ENCODE measurements at regions of chr1 and their contacts with region 1.

Region 1: DNA sequence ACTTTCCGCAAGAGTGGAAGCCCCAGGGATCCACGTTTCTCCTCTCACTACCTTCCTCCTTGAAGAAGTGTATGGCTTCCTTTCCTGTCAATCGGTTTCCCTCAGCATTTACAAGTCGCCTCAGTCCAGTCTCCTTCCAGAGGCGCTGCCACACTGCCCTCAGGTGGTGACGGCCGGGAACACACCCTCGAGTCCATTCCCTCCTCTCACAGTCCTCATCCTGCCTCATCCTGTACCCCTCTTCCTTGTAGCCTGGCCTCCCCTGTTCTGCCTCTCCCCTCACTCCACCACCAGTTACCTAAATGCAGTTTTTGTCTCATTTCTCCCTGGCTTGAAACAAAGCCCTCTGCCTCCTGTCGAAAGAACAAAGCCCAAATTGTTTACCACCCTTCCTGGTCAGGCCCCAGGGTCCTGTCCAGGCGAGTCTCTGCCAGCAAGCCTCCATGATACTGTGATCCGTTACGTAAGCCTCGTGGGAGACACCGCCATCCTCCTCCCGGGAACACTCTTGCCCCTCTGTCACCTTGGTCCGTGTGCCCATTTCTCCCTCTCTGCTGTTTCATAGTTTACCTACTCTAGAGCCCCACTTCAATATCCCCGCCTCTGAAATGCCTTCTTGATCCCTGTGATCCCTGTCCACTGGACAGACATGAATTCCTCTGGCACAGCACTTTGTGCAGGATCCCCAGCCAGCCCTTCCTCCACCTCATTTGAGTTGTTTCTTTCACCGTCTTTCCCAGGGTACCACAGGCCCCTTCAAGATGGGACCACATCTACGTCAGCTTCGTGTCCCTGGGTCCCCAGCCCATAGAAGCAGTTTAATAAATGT is 23.3 kb upstream of the LSM10 start:
- DNase-seq: peak; percentile 95
- ATAC-seq: peak; percentile 94
- H3K4me3 Mint-ChIP-seq: no peak overlapping the region
- H3K27ac Mint-ChIP-seq: peak overlapping the region; percentile 91
- H3K4me1 Mint-ChIP-seq: peaks cover 19% of the 10 kb centered on the region
- H3K27me3 Mint-ChIP-seq: no peaks in the 10 kb centered on the region

Region 2: GRCh38 chr1:36099681-36100341 is 321.2 kb before region 1 on chr1:
- CTCF ChIA-PET with region 1: interaction called, 3 read pairs
- POLR2A ChIA-PET with region 1: no interaction called
- intact Hi-C with region 1: loop called in 1 of 2 experiments (anchors 1 kb)
- DNase-seq: peak; percentile 87
- ATAC-seq: peak; percentile 95
- H3K4me3 Mint-ChIP-seq: no peak overlapping the region
- H3K27ac Mint-ChIP-seq: peak overlapping the region; percentile 10
- H3K4me1 Mint-ChIP-seq: no peaks in the 10 kb centered on the region
- H3K27me3 Mint-ChIP-seq: no peaks in the 10 kb centered on the region

Region 3: DNA sequence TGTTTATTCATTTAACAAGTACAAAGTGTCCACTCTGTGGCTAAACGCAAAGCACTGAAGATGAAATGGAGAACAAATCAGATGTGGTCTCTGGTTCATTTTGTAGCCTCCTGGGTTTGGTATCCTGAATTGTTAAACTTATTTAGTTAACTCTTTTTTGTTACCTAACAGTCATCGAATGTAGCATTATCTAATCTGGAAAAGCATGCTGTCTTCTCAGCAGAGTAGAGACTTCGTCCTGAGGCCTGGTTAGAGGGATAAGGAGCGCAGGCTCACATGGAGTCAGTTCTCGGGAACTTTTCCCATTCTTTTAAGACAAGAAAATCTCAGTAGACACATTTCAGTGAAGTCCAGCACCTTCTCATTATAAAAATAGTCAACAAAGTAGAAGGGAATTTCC is 148.0 kb before region 1 on chr1:
- CTCF ChIA-PET with region 1: no interaction called
- POLR2A ChIA-PET with region 1: no interaction called
- intact Hi-C with region 1: no loop called
- DNase-seq: no peak
- ATAC-seq: no peak
- H3K4me3 Mint-ChIP-seq: no peak overlapping the region
- H3K27ac Mint-ChIP-seq: no peak overlapping the region
- H3K4me1 Mint-ChIP-seq: peaks cover 5% of the 10 kb centered on the region
- H3K27me3 Mint-ChIP-seq: no peaks in the 10 kb centered on the region

Region 4: DNA sequence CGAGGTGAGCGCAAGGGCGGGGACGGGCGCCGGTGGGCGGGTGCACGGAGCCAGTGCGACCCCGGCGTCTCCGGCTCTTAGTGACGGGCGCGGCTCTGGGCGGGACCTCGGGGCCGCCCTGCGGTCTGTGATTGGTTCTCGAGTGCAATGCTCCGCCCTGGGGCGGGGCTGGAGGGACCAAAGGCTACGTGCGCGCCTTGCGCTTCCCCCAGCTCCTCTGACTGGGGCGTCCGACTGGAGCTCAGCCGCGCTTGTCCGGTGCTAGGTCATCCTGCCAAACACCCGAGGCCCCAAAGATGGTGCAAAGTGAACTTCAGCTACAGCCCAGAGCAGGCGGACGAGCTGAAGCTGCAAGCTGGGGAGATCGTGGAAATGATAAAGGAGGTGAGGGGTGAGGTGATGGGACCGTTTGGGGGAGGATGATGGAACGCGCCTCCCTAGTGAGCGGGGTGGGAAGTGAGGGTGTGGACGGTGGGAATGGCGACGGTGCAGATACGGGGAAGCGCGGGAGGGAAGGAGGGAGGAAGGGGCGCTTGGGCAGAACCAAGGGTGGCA is 114.1 kb before region 1 on chr1:
- CTCF ChIA-PET with region 1: interaction called, 6 read pairs
- POLR2A ChIA-PET with region 1: interaction called, 4 read pairs
- intact Hi-C with region 1: loop called in 1 of 2 experiments (anchors 1 kb)
- DNase-seq: peak; percentile 96
- ATAC-seq: peak; percentile 91
- H3K4me3 Mint-ChIP-seq: peak overlapping the region; percentile 98
- H3K27ac Mint-ChIP-seq: peak overlapping the region; percentile 96
- H3K4me1 Mint-ChIP-seq: peaks cover 45% of the 10 kb centered on the region
- H3K27me3 Mint-ChIP-seq: no peaks in the 10 kb centered on the region

Region 5: DNA sequence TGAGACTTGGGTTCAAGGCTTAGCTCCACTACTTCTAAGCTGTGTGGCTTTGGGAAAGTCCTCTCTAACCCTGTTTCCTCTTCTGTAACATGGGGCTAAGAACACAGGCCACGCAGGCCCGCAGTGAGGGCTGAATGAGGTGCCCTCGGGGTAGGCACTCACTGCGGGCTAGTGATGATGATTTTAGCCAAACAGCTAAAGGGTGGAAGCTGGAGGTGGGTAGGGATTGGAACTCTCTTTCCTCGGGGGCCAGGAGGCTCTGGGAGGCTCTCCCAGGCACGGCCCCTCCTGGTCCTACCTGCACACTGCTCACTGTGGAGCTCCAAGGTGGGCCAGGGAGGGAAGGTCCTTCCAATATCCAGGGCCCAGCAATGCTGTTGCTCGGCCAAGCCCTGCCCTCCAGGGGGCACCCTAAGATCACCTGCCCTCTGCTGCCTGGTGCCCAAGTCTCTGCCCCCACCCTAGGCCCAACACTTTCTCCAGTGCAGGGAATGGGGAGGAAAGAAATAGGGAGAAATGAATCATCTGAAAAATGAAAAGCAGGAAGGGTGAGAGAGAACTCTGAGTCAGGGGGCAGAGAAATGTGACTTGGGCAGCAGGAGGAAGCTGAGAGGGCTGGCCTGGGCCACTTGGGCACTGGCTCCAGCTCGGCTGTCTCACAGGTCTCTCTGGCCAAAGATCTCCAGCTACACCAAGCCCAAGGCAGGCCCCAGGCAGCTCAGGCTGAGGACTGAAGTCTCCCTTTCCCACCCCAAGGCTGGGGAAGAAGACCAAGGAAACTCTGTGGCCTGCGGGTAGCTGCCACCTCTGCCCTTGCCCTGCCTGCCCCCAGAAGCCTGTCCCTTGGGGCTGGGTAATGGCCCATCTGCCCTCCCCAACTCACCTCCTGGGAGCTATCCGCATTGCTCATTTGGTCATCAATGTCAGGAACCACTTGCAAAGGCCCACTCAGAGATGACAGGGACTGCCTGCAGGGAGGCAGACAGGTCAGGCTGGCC is 78.3 kb before region 1 on chr1:
- CTCF ChIA-PET with region 1: interaction called, 45 read pairs
- POLR2A ChIA-PET with region 1: no interaction called
- intact Hi-C with region 1: loop called (anchors 1 kb)
- DNase-seq: peak; percentile 77
- ATAC-seq: peak; percentile 88
- H3K4me3 Mint-ChIP-seq: no peak overlapping the region
- H3K27ac Mint-ChIP-seq: no peak overlapping the region
- H3K4me1 Mint-ChIP-seq: peaks cover 20% of the 10 kb centered on the region
- H3K27me3 Mint-ChIP-seq: no peaks in the 10 kb centered on the region

Region 6: DNA sequence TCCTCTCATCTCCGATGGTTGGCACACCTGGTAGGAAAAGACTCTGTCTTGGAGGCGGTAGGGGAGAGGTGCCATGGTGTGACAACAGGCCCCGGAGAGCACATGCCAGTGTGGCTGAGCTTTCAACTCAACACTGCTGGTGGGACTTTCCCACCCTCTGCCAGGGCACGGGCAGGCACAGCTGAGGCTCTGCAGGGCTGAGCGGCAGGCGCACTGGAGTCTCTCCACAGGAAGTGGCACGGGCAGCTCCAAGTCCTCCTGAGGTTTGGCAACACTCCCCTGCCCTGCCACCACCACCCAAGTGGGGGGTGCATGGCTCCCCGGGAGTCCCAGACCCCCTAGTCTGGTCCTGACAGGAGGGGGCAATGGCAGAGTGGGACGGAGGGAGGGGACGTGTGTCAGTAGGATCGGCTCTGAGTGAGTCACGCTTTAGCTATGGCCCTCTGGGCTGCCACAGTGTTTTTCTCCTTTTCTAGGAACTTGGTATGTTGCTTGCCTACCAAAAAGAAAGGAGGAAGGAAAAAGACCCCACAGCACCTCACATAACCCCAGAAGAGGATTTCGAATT is 70.3 kb before region 1 on chr1:
- CTCF ChIA-PET with region 1: interaction called, 45 read pairs
- POLR2A ChIA-PET with region 1: no interaction called
- intact Hi-C with region 1: loop called in 1 of 2 experiments (anchors 2 kb)
- DNase-seq: peak; percentile 77
- ATAC-seq: peak; percentile 87
- H3K4me3 Mint-ChIP-seq: peak overlapping the region; percentile 15
- H3K27ac Mint-ChIP-seq: peak overlapping the region; percentile 80
- H3K4me1 Mint-ChIP-seq: peaks cover 38% of the 10 kb centered on the region
- H3K27me3 Mint-ChIP-seq: no peaks in the 10 kb centered on the region

Region 7: DNA sequence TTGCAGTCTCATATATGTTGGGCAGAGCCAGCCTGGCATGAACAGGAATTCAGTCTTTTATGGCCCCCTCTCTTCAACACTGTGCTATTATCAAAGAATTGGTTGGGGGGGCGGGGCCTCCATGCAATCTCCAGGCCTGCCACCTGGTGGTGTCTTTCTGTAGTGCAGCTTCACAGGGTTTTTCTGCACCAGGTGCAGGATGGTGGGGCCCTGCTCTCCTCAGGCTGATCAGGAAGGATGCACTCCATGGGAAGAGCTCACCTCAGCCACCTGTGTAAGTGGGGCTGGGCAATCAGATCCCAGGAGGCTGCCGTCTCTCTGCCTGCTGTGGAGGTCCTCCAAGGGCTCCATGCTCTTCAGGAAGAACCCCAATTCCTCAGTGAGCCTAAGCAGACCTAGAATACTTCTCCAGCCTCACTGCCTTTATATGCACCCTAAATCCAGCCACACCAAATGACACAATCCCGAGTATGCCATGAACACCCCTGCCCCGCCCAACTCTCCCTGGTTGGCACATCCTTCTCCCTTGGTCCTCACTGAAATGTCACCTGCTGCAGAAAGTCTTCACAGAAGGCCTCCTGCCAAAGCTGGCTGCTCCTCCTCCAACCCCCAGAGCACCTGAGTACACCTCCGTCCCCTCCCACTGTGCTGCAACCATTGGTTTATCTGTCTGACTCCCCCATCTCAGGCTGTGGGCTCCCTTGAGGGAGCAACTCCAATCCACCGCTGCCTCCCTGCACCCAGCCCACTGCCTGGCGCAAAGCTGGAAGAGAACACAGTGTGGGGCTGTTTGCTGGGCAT is 51.8 kb before region 1 on chr1:
- CTCF ChIA-PET with region 1: interaction called, 4 read pairs
- POLR2A ChIA-PET with region 1: interaction called, 3 read pairs
- intact Hi-C with region 1: loop called (anchors 1 to 2 kb)
- DNase-seq: peak; percentile 92
- ATAC-seq: peak; percentile 35
- H3K4me3 Mint-ChIP-seq: no peak overlapping the region
- H3K27ac Mint-ChIP-seq: peak overlapping the region; percentile 76
- H3K4me1 Mint-ChIP-seq: peaks cover 69% of the 10 kb centered on the region
- H3K27me3 Mint-ChIP-seq: no peaks in the 10 kb centered on the region

Measured in activated CD4-positive, alpha-beta T cell treated with anti-CD3 and anti-CD28 coated beads for 36 hours (primary cell).